Activated CD4-positive, alpha-beta memory T cell treated with anti-CD3 and anti-CD28 coated beads, Interleukin-2, amount 10 ng/mL, durations not matched to agents 7 days and 5 days (primary cell): ENCODE measurements at regions of chr12 and their contacts with region 1.

Region 1: DNA sequence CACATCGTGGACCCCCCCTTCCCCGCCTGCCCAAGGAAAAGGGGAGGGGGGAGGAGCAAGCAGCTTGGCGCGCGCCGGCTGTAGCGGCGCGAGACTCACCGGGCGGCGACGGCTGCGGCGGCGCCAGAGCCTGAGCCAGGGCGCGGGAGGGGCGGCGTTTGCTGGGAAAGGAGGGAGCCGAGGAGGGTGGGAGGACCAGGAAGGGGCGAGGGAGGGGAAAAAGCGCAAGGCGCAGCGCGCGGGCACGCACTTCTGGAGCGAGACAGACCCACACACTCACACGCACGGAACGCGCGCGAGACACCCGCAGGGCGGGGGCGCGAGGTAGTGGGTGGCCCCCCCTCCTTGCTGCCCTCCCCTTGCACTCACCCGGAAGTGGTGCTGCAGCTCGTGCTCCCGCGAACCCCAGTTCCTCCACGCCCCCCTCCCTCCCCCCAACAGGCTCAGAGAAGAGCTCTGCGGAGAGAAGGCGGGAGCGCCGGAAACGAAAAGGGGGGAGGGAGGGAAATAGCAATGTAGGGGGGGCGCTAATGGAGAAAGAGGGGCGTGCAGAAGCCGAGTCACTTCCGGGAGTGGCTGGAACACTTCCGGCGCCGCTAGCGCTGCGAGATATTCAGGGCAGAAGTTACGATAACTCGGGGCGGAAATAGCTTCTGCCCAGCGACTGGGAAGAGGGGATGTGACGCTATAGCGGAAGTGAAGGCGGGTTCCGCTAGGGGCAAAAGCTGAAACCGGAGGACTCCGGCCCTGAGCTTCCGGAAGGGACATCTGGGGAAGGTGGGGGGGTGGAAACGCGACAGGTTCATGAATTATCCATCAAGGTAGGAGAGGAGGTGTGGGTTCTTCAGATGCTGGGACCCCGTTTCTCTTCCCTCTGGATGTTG is at the start of gene ZNF384:
- DNase-seq: peak; percentile 97
- H3K4me3 Mint-ChIP-seq: peak within 1 kb of the TSS; percentile 87
- H3K27ac Mint-ChIP-seq: peak within 1 kb of the TSS; percentile 91
- H3K4me1 Mint-ChIP-seq: peaks cover 55% of the 10 kb centered on the region
- H3K27me3 Mint-ChIP-seq: no peaks in the 10 kb centered on the region
- total RNA-seq, gene ZNF384: 69.5 to 78.1 TPM

Region 2: GRCh38 chr12:6570264-6570887 is 118.9 kb before region 1 on chr12:
- CTCF ChIA-PET with region 1: interaction called, 5 read pairs
- POLR2A ChIA-PET with region 1: interaction called, 14 read pairs
- DNase-seq: peak; percentile 56
- H3K4me3 Mint-ChIP-seq: peak overlapping the region; percentile 43
- H3K27ac Mint-ChIP-seq: peak overlapping the region; percentile 49
- H3K4me1 Mint-ChIP-seq: peaks cover 54% of the 10 kb centered on the region
- H3K27me3 Mint-ChIP-seq: no peaks in the 10 kb centered on the region

Region 3: DNA sequence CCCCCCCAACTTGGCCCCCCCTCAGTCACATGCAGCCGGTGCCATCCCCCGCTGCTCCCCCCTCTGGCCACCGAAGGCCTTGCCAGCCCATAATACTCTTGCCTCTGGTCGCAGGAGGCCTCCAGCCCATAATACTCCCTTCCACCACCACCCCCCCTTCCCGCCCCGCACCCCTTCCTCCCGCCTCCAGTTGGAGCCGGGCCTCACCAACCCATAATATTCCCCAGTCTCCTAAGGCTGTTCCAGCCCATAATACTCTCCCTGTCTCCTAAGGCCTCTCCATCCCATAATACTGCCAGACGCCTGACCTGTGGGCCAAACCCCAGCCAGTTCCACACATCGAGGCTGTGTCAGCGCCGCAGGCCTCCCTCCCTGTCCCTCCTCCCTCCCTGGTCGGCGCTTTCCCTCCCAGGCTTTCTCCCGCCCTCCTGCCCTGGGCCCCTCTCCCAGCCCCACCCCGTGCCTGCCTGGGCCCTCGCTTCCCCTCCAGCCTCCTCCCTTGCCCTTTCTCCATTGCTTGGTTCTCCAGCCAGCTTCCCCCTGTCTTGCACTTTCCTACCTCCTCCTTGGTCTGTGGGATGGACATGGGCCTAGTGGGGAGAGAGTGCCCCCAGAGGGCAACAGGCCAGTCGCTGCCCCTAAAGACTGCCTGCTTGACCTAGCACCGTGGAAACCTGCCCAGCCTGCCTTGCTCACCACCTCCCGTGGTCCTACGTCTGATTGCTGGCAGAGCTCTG is 75.3 kb before region 1 on chr12:
- CTCF ChIA-PET with region 1: interaction called, 23 read pairs
- POLR2A ChIA-PET with region 1: interaction called, 20 read pairs
- DNase-seq: peak; percentile 61
- H3K4me3 Mint-ChIP-seq: no peak overlapping the region
- H3K27ac Mint-ChIP-seq: no peak overlapping the region
- H3K4me1 Mint-ChIP-seq: peaks cover 46% of the 10 kb centered on the region
- H3K27me3 Mint-ChIP-seq: no peaks in the 10 kb centered on the region

Region 4: DNA sequence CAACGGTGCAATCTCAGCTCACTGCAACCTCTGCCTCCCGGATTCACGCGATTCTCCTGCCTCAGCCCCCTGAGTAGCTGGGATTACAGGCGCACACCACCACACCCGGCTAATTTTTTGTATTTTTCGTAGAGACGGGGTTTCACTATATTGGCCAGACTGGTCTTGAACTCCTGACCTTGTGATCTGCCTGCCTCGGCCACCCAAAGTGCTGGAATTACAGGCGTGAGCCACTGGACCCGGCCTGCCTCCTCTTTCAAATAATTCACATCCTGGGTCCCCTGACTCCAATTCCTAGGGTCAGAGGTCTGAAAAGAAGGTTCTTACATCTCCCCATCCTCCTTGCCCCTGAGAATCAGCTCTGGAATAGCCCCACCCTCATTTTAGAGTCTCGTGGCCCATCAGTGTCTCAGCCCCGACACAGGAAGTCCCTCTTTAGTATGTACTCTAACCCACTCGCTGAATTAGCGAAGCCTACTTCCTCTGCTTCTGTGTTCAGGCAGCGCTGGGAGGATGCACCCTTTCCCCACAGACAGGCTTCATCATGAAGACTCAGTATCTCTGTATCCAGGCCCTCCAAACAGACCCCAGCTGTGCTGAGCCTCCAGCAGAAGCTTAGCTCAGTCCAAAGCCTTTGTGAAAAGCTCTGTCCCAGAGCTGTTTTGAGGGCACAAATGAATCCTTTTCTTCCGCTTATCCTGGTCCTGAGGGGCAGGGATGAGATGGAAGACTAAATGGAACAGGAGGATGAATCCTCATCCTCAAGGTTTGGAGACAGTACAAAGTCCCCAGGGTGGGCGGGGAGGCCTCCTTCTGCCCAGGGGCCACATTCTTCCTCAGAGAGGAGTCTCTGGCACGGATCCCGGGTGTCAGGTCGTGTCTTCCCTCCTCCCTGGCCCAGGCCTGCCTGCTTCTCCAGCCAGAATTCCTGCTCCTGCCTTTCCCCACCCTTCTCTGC is 56.9 kb before region 1 on chr12:
- CTCF ChIA-PET with region 1: interaction called, 5 read pairs
- POLR2A ChIA-PET with region 1: interaction called, 16 read pairs
- DNase-seq: peak; percentile 64
- H3K4me3 Mint-ChIP-seq: peak overlapping the region; percentile 58
- H3K27ac Mint-ChIP-seq: peak overlapping the region; percentile 91
- H3K4me1 Mint-ChIP-seq: peaks cover 59% of the 10 kb centered on the region
- H3K27me3 Mint-ChIP-seq: no peaks in the 10 kb centered on the region

Region 5: DNA sequence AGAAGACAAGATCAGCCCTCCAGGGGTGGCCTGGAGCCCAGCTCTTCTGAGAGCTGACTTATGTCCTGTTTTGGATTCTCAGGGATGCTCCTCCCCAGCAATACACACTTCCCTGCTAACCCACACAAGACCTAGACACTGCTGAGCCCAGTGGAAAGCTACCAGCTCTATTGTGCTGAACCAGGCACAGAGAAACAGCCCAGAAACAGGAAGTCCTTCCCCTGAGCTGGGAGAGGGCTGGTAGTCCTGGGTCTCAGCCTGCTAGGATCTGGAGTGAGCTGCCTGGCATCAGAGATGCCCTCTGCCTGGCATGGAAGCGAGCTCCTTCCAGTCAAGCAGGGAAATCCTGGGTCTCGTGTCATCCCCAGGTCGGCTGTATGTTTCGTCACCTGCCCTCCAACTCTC is 81.9 kb after region 1 on chr12:
- CTCF ChIA-PET with region 1: interaction called, 3 read pairs
- POLR2A ChIA-PET with region 1: interaction called, 10 read pairs
- DNase-seq: no peak
- H3K4me3 Mint-ChIP-seq: no peak overlapping the region
- H3K27ac Mint-ChIP-seq: no peak overlapping the region
- H3K4me1 Mint-ChIP-seq: peaks cover 72% of the 10 kb centered on the region
- H3K27me3 Mint-ChIP-seq: peaks cover 13% of the 10 kb centered on the region

Region 6: GRCh38 chr12:7113389-7113871 is 424.2 kb after region 1 on chr12:
- CTCF ChIA-PET with region 1: no interaction called
- POLR2A ChIA-PET with region 1: no interaction called
- DNase-seq: peak; percentile 48
- H3K4me3 Mint-ChIP-seq: no peak overlapping the region
- H3K27ac Mint-ChIP-seq: no peak overlapping the region
- H3K4me1 Mint-ChIP-seq: peaks cover 33% of the 10 kb centered on the region
- H3K27me3 Mint-ChIP-seq: no peaks in the 10 kb centered on the region